ENCODE measurements at regions of chr1 and their contacts with region 1.

Region 1: DNA sequence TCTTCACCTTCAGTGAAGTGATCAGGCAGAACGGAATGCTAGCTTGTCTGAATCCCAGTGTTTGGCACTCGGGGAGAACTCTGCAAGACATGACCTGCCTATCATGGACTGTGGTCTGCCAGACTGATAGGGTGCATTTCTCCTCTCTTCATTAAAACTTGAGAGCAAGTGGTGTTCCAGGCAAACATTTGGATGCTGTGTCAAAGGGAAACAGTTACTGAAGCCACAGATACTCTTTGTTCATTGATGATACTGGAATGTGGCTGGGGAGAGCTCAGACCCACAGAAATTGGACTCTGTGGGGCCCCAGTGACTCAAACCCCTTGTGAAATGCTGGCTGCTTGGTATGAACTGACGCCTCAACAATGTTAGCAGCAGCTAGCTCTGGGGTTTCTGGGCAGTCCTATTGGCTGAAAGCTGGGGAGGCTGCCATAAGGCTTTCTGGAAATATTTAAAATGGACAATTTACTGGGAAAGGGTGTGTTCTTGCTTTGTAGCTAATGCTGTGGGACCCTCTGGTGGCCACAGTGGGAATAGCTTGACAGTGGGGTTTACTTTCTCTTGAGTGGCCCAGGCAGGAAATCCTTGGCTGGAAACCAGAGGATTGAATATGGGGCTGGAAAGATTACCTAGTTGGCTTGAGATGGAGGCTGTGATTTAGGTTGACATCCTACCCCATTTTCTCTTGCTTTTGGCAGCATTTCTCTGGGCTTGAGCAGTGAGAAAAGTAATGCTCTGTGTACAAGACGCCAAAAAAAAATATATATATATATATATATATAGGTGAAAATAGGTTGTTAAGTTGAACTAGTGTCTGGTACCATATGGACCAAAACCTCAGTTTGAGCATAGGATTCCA is 8.0 kb upstream of the S100A10 start:
- DNase-seq: peak; percentile 93 to 94
- H3K4me3 ChIP-seq: no peak overlapping the region
- H3K27ac ChIP-seq: no peak overlapping the region
- H3K4me1 ChIP-seq: peaks cover 0 to 11% of the 10 kb centered on the region in 2 donors
- H3K27me3 ChIP-seq: no peaks in the 10 kb centered on the region
- CTCF ChIP-seq: peak; percentile 88 to 95 (median 93)
- POLR2A ChIP-seq: no peak

Region 2: GRCh38 chr1:151526735-151527525 is 474.7 kb before region 1 on chr1:
- intact Hi-C with region 1: no loop called
- DNase-seq: peak; percentile 24 to 40
- H3K4me3 ChIP-seq: no peak overlapping the region
- H3K27ac ChIP-seq: no peak overlapping the region
- H3K4me1 ChIP-seq: no peaks in the 10 kb centered on the region
- H3K27me3 ChIP-seq: no peaks in the 10 kb centered on the region
- CTCF ChIP-seq: no peak
- POLR2A ChIP-seq: no peak

Region 3: GRCh38 chr1:151934048-151934493 is 67.5 kb before region 1 on chr1:
- intact Hi-C with region 1: loop called (anchors 2 kb)
- DNase-seq: peak; percentile 25 to 29
- H3K4me3 ChIP-seq: no peak overlapping the region
- H3K27ac ChIP-seq: no peak overlapping the region
- H3K4me1 ChIP-seq: no peaks in the 10 kb centered on the region
- H3K27me3 ChIP-seq: no peaks in the 10 kb centered on the region
- CTCF ChIP-seq: peak; percentile 69 to 90 (median 80)
- POLR2A ChIP-seq: no peak

Region 4: DNA sequence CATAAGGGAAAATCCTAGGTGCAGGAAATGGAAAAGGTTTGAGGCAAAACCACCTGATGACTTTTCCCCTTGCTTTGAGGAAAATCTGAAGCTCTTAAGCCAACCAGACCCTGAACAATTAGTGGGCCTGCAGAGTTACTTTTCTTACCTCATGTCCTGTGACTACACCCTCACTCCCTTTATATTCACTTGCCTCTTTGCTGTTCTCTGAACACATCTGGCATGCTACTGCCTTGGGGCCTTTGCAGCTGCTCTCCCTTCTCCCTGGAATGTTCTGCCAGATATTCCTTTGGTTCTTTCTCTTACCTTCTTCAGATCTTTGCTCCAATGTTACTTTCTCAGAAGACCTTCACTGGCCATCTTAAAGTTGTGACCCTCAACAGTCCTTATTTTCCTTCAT is 135.6 kb after region 1 on chr1:
- intact Hi-C with region 1: no loop called
- DNase-seq: no peak
- H3K4me3 ChIP-seq: no peak overlapping the region
- H3K27ac ChIP-seq: no peak overlapping the region
- H3K4me1 ChIP-seq: no peaks in the 10 kb centered on the region
- H3K27me3 ChIP-seq: peaks cover 4% of the 10 kb centered on the region
- CTCF ChIP-seq: no peak
- POLR2A ChIP-seq: no peak

Measured in thyroid gland (tissue), 4 donors.